ENCODE measurements at regions of chr16 and their contacts with region 1.

Region 1: DNA sequence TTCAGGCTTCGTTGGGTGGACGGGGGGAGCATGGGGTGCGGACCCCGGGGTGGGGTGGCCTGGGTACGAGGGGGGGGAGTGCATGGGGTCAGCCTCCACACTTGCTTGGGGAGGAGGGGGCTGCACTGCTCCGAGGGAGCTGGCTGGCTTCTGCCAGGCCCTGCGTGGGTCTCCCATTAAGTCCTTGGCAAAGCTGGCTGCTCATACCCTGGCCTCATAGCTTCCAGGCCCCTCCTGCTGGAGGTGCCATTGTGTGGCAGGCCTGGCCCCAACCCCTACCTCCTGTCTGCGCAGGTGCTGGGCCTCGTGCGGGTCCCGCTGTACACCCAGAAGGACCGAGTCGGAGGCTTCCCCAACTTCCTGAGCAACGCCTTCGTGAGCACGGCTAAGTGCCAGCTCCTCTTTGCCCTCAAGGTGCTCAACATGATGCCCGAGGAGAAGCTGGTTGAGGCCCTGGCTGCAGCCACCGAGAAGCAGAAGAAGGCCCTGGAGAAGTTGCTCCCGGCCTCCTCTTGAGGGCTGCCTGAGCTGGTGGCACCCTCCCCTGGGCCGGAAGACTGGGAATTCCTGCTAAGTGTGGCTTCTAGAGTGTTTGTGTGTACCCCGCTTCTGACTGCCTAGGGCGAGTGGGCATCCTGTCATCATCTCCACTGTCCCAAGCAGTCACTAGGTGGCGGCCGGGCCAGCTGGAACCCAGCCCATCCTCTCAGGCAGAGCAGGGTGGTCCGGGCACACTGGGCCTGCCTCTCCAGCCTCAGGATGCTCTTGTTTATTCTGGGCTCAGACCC is 1.5 kb downstream of the NUDT16L1 start:
- DNase-seq: no peak
- CTCF ChIP-seq: no peak

Region 2: GRCh38 chr16:4706871-4707270 is 12.0 kb after region 1 on chr16:
- CTCF ChIA-PET with region 1: interaction called, 11 read pairs
- POLR2A ChIA-PET with region 1: no interaction called
- DNase-seq: no peak
- CTCF ChIP-seq: no peak